ENCODE measurements at regions of chr16 and their contacts with region 1.

Region 1: DNA sequence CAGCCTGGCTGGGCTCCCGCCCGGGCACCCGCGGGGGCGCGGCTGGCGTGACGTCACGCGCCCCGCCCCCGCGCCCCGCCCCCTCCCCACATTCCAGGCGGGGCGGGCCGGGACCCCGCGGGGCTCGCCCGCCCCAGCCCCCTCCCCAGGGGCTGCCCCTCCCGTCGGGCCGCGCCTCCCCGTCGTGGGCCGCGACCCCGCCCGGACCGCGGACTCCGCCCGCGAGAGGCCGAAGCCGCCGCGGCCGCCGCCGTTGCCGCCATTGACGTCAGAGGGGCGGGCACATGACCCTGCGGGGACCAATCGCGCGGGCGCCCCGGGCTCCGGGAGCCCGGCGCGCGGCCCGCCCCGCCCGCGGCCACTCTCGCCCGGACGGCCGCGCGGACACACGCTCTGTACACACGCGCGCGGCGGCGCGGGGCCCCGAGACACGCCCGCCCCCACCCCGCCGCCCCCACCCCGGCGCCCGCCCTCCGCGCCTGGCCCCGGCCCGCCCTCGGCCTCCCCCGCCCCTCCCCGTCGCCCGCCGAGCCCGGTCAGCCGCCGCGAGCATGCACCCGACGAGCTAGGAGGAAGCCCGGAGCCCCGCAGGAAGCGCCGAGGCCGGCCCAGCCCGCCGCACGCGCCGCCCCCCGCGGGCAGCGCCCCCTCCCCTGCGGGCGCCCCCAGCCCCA is at the start of gene CMIP:
- DNase-seq: peak; percentile 66 to 89 (median 79)
- ATAC-seq: peak; percentile 88
- H3K4me3 ChIP-seq: peak within 1 kb of the TSS; percentile 91
- H3K4me3 Mint-ChIP-seq: peak within 1 kb of the TSS; percentile 85 to 94 (median 90)
- H3K27ac ChIP-seq: peak within 1 kb of the TSS; percentile 77
- H3K27ac Mint-ChIP-seq: peak within 1 kb of the TSS; percentile 90 to 97 (median 94)
- H3K4me1 ChIP-seq: peaks cover 35 to 37% of the 10 kb centered on the region in 2 donors
- H3K4me1 Mint-ChIP-seq: peaks cover 26 to 54% (median 48%) of the 10 kb centered on the region in 7 donors
- H3K27me3 ChIP-seq: no peaks in the 10 kb centered on the region
- H3K27me3 Mint-ChIP-seq: peaks cover 0 to 41% (median 0%) of the 10 kb centered on the region in 5 donors
- total RNA-seq, gene CMIP: 28.9 to 75.4 (median 38.2) TPM

Region 2: DNA sequence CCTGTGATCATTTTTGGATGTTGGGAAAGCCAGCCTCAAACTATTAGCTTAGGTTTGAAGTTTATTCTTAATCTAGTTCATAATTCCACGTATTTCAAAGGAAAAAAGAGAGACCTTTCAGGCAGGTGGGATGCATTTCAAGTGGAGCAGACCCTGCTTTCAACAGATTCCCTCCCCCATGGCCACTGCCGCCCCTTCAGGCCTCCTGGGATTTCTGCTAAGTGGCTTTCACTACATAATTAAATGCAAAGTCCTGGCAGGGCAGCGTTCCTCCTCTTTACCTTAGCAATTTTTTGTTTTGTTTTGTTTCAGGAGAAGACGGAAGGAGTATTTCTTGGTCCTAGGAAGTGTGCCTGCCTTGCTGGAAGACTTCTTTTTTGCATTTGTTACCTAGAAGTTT is 1880.7 kb before region 1 on chr16:
- CTCF ChIA-PET with region 1: no interaction called
- POLR2A ChIA-PET with region 1: no interaction called
- intact Hi-C with region 1: no loop called
- DNase-seq: no peak
- ATAC-seq: no peak
- H3K4me3 ChIP-seq: no peak overlapping the region
- H3K4me3 Mint-ChIP-seq: no peak overlapping the region
- H3K27ac ChIP-seq: no peak overlapping the region
- H3K27ac Mint-ChIP-seq: peak overlapping the region in 1 of 9 donors; percentile 23
- H3K4me1 ChIP-seq: no peaks in the 10 kb centered on the region
- H3K4me1 Mint-ChIP-seq: no peaks in the 10 kb centered on the region
- H3K27me3 ChIP-seq: no peaks in the 10 kb centered on the region
- H3K27me3 Mint-ChIP-seq: peaks cover 0 to 23% (median 10%) of the 10 kb centered on the region in 5 donors

Region 3: DNA sequence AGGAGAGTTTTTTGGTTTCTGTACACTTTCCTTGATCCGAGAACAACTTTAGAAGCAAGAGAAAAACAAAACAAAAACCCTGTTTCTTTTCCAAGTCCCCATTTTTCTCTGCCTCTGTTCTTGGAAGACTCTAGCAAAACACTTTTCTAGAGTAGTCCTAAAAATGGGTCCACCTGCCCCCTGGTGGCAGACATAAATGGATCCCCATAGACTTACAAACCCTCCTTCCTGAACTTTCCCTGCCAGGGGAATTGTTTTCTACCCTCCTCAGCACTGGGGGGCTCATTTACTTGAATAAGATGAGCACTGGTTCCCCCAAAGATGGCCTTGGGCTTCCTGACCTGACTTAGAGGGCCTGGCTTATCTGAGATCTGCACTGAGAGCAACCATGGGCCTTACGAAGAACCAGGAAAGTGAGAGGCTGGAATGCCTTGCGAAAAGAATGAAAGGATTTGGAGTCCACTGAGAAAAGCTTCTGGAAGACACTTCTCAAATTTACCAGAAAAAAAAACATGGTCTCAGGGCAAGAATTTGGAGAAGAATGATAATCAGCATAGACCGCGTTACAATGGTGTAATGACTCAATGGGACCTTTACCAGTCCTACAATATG is 592.2 kb before region 1 on chr16:
- CTCF ChIA-PET with region 1: no interaction called
- POLR2A ChIA-PET with region 1: no interaction called
- intact Hi-C with region 1: no loop called
- DNase-seq: peak in 2 of 9 donors; percentile 4 to 26
- ATAC-seq: no peak
- H3K4me3 ChIP-seq: no peak overlapping the region
- H3K4me3 Mint-ChIP-seq: no peak overlapping the region
- H3K27ac ChIP-seq: no peak overlapping the region
- H3K27ac Mint-ChIP-seq: no peak overlapping the region
- H3K4me1 ChIP-seq: no peaks in the 10 kb centered on the region
- H3K4me1 Mint-ChIP-seq: no peaks in the 10 kb centered on the region
- H3K27me3 ChIP-seq: no peaks in the 10 kb centered on the region
- H3K27me3 Mint-ChIP-seq: peaks cover 0 to 27% (median 9%) of the 10 kb centered on the region in 5 donors

Region 4: GRCh38 chr16:81095953-81096717 is 348.4 kb before region 1 on chr16 and contains the start of gene GCSH:
- CTCF ChIA-PET with region 1: no interaction called
- POLR2A ChIA-PET with region 1: no interaction called
- intact Hi-C with region 1: loop called in 1 of 2 experiments (anchors 10 kb)
- DNase-seq: peak; percentile 94 to 99 (median 98)
- ATAC-seq: peak; percentile 98
- H3K4me3 ChIP-seq: peak within 1 kb of the TSS; percentile 71
- H3K4me3 Mint-ChIP-seq: peak within 1 kb of the TSS; percentile 72 to 93 (median 82)
- H3K27ac ChIP-seq: peak within 1 kb of the TSS; percentile 67
- H3K27ac Mint-ChIP-seq: peak within 1 kb of the TSS; percentile 45 to 87 (median 71)
- H3K4me1 ChIP-seq: peaks cover 0 to 6% of the 10 kb centered on the region in 2 donors
- H3K4me1 Mint-ChIP-seq: peaks cover 3 to 19% (median 9%) of the 10 kb centered on the region in 7 donors
- H3K27me3 ChIP-seq: no peaks in the 10 kb centered on the region
- H3K27me3 Mint-ChIP-seq: no peaks in the 10 kb centered on the region
- total RNA-seq, gene GCSH: 1.5 to 7.5 (median 4.9) TPM

Region 5: DNA sequence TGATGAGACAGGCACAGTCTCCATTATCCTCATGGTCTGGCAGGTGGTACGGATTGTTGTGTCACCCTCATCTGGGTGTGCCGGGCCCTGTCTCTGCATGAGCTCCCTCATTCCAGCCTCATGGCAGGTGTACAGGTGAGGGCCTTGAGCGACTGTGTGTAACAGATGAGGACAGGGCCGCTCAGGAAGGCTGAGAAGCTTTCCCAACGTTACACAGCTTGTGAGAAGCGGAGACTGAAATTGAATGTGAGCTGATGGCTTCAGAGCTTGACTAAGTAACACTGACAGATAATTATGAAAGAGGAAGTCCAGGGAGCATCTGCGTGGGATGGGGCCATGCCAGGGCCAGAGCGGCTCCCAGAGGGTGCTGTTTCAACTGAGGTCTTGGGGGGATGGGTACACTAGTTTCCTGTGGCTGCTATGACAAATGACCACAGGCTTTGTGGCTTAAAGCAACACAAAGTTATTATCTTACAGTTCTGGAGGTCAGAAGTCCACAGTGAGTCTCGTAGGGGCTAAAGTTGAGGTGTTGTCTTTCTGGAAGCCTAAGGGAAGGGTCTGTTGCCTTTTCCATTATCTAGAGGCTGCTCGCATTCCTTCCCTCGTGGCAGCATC is 36.7 kb after region 1 on chr16:
- CTCF ChIA-PET with region 1: no interaction called
- POLR2A ChIA-PET with region 1: no interaction called
- intact Hi-C with region 1: loop called in 1 of 2 experiments (anchors 5 kb)
- DNase-seq: no peak
- ATAC-seq: peak; percentile 87
- H3K4me3 ChIP-seq: no peak overlapping the region
- H3K4me3 Mint-ChIP-seq: peak overlapping the region in 1 of 10 donors; percentile 12
- H3K27ac ChIP-seq: no peak overlapping the region
- H3K27ac Mint-ChIP-seq: peak overlapping the region in 3 of 9 donors; percentile 14 to 86 (median 37)
- H3K4me1 ChIP-seq: peaks cover 25 to 37% of the 10 kb centered on the region in 2 donors
- H3K4me1 Mint-ChIP-seq: peaks cover 46 to 78% (median 67%) of the 10 kb centered on the region in 7 donors
- H3K27me3 ChIP-seq: no peaks in the 10 kb centered on the region
- H3K27me3 Mint-ChIP-seq: no peaks in the 10 kb centered on the region

Region 6: DNA sequence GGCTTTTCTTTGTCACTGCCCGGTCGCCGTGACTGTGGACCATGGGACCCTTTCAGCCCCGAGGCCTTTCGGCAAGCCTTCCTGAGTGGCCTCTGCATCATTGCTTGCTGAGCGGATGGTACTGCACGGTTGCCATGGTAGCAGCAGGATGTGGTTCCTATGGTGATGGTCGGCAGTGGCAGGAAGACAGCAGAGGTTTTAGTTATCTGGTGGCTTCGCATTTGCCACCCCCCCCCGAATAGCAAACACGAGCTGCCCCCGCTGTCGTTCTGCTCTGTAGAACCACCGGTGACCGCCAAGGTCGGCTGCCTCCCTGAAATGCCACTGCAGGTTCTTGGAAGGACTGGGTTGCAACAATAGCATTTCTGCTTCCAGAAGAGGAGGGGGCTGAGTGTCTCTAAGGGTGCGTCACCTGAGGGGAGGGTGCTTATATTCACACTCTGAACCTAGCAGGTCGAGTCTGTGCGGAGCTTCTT is 76.6 kb after region 1 on chr16:
- CTCF ChIA-PET with region 1: no interaction called
- POLR2A ChIA-PET with region 1: no interaction called
- intact Hi-C with region 1: loop called (anchors 1 kb)
- DNase-seq: peak; percentile 34 to 79 (median 65)
- ATAC-seq: peak; percentile 70
- H3K4me3 ChIP-seq: no peak overlapping the region
- H3K4me3 Mint-ChIP-seq: peak overlapping the region in 1 of 10 donors; percentile 48
- H3K27ac ChIP-seq: no peak overlapping the region
- H3K27ac Mint-ChIP-seq: peak overlapping the region; percentile 43 to 90 (median 68)
- H3K4me1 ChIP-seq: peaks cover 7 to 52% of the 10 kb centered on the region in 2 donors
- H3K4me1 Mint-ChIP-seq: peaks cover 14 to 61% (median 25%) of the 10 kb centered on the region in 7 donors
- H3K27me3 ChIP-seq: no peaks in the 10 kb centered on the region
- H3K27me3 Mint-ChIP-seq: no peaks in the 10 kb centered on the region

Region 7: DNA sequence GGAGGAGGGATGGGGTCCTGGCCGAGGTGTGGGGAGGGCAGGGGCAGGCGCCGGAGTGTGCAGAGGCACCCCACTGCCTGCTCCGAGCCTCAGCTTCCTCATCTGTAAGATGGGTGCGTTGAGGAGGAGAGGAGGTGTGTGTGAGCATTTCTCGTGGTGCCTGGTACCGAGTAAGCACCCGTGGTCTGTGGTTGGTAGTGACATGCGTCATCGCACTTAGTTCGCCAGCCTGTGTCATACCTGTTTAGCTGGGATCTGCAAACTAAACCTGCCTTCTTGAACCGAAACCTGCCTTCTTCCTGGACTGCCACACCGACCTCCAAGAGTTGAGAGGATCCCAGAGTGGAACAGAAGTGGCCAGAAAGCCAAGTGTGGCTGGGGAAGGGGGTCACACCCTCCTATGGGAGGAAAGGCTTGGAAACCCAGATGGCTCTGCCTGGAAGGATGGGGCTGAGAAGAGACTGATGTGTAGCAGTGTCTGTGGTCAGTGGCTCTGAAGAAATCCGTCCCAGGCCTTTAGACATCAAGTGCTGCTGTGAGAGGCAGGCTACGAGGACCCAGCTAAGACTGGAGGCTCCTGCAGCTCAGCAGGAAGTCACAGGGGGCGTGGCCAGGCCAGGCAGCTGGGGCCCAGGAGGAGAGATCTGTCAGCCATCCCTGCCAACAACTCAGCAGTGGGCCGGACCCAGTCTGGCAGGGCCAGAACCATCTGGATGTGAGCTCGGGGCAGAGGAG is 171.9 kb after region 1 on chr16:
- CTCF ChIA-PET with region 1: no interaction called
- POLR2A ChIA-PET with region 1: interaction called, 4 read pairs
- intact Hi-C with region 1: loop called (anchors 1 to 5 kb)
- DNase-seq: peak; percentile 44 to 64 (median 56)
- ATAC-seq: peak; percentile 92
- H3K4me3 ChIP-seq: peak overlapping the region; percentile 34
- H3K4me3 Mint-ChIP-seq: peak overlapping the region in 9 of 10 donors; percentile 26 to 64 (median 50)
- H3K27ac ChIP-seq: peak overlapping the region; percentile 70
- H3K27ac Mint-ChIP-seq: peak overlapping the region in 5 of 9 donors; percentile 78 to 93 (median 88)
- H3K4me1 ChIP-seq: peaks cover 22% of the 10 kb centered on the region in 2 donors
- H3K4me1 Mint-ChIP-seq: peaks cover 0 to 12% (median 10%) of the 10 kb centered on the region in 7 donors
- H3K27me3 ChIP-seq: no peaks in the 10 kb centered on the region
- H3K27me3 Mint-ChIP-seq: no peaks in the 10 kb centered on the region

Region 8: DNA sequence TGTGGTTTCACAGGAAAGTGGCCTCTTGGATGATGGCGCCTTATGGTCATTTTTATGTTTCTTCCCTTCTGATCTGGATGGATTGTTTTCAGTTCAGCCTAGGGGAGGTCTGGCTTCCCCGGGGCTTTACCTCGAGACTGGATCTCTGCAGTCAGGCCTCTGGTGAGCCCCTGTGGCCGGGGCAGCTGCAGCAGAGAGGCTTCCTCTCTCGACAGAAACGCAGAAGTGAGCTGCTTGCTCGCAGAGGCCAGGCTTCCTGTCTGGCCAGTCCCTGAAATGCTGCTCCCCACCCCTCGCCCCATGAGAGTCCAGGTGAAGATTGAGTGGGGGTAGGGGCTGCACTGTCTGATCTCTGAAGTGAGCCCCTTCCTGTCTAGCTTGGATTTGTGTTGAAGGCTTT is 378.5 kb after region 1 on chr16:
- CTCF ChIA-PET with region 1: no interaction called
- POLR2A ChIA-PET with region 1: no interaction called
- intact Hi-C with region 1: no loop called
- DNase-seq: no peak
- ATAC-seq: peak; percentile 76
- H3K4me3 ChIP-seq: no peak overlapping the region
- H3K4me3 Mint-ChIP-seq: peak overlapping the region in 1 of 10 donors; percentile 71
- H3K27ac ChIP-seq: no peak overlapping the region
- H3K27ac Mint-ChIP-seq: no peak overlapping the region
- H3K4me1 ChIP-seq: peaks cover 0 to 11% of the 10 kb centered on the region in 2 donors
- H3K4me1 Mint-ChIP-seq: peaks cover under 1 to 32% (median 3%) of the 10 kb centered on the region in 7 donors
- H3K27me3 ChIP-seq: no peaks in the 10 kb centered on the region
- H3K27me3 Mint-ChIP-seq: peaks cover 0 to 15% (median 6%) of the 10 kb centered on the region in 5 donors

Measured in naive thymus-derived CD4-positive, alpha-beta T cell (primary cell).